H1 (cell line): ENCODE measurements at regions of chr17 and their contacts with region 1.

Region 1: GRCh38 chr17:30336369-30337171 is 2.7 kb upstream of the TMIGD1 start:
- DNase-seq: peak; percentile 9 to 63
- H3K4me3 ChIP-seq: no peak overlapping the region
- H3K27ac ChIP-seq: no peak overlapping the region
- H3K4me1 ChIP-seq: peaks cover 0 to 4% (median 1%) of the 10 kb centered on the region in 4 experiments; a peak in 3 of 7 replicates
- H3K27me3 ChIP-seq: no peaks in the 10 kb centered on the region
- CTCF ChIP-seq: peak in 2 of 3 experiments; percentile 70 to 71; a peak in 3 of 4 replicates
- EP300 ChIP-seq: no peak
- POLR2A ChIP-seq: no peak
- RAD21 ChIP-seq: peak; percentile 76

Region 2: DNA sequence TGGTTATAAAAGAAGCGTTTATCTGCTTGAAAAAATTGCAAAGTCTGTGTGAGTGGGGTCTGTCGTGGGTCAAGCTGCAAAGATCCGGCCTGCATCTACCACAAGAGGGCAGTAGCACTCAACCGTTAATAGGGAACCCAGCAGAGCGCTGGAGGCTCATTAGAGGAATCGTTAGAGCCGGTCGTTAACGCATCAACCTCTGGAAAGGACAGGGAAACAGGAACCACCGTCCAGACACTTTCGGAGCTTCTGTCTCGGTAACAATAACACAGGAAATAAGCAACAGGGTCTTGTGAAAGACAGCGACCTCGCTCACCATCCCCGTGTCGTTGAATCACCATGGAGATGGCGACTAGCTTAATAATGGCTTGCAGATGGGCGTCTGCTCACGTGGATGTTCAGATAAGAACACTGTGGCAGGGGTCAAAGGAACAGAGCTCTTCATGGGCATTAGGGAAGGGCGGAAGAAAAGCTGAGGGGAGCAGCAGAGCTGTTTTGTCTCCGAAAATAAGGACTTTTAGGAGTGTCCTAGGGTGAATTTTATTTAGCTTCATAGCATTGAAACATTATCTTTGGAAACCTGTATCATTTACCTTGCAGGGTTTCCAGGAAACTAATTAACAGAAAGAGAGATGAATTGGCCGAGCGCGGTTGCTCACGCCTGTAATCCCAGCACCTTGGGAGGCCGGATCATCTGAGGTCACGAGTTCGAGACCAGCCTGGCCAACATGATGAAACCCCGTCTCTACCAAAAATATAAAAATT is 231.8 kb before region 1 on chr17:
- CTCF ChIA-PET with region 1: interaction called, 10 read pairs
- POLR2A ChIA-PET with region 1: interaction called, 4 read pairs
- DNase-seq: peak; percentile 56 to 77
- H3K4me3 ChIP-seq: peak overlapping the region; percentile 28 to 61 (median 52); a peak in 7 of 8 replicates
- H3K27ac ChIP-seq: no peak overlapping the region
- H3K4me1 ChIP-seq: no peaks in the 10 kb centered on the region
- H3K27me3 ChIP-seq: no peaks in the 10 kb centered on the region
- CTCF ChIP-seq: peak; percentile 80 to 88 (median 81)
- EP300 ChIP-seq: no peak
- POLR2A ChIP-seq: peak; percentile 37 to 47; a peak in 2 of 3 replicates
- RAD21 ChIP-seq: peak; percentile 79 to 86

Region 3: GRCh38 chr17:30236766-30237165 is 99.8 kb before region 1 on chr17:
- CTCF ChIA-PET with region 1: interaction called, 19 read pairs
- POLR2A ChIA-PET with region 1: interaction called, 3 read pairs
- DNase-seq: peak; percentile 19 to 84
- H3K4me3 ChIP-seq: peak overlapping the region in 1 of 4 experiments; percentile 63; a peak in 3 of 8 replicates
- H3K27ac ChIP-seq: no peak overlapping the region
- H3K4me1 ChIP-seq: peaks cover 0 to 18% (median 15%) of the 10 kb centered on the region in 4 experiments; a peak in 5 of 7 replicates
- H3K27me3 ChIP-seq: peaks cover 32 to 63% (median 58%) of the 10 kb centered on the region in 4 experiments
- CTCF ChIP-seq: peak; percentile 43 to 62 (median 61)
- EP300 ChIP-seq: no peak
- POLR2A ChIP-seq: no peak
- RAD21 ChIP-seq: peak; percentile 57 to 76; a peak in 3 of 4 replicates

Region 4: DNA sequence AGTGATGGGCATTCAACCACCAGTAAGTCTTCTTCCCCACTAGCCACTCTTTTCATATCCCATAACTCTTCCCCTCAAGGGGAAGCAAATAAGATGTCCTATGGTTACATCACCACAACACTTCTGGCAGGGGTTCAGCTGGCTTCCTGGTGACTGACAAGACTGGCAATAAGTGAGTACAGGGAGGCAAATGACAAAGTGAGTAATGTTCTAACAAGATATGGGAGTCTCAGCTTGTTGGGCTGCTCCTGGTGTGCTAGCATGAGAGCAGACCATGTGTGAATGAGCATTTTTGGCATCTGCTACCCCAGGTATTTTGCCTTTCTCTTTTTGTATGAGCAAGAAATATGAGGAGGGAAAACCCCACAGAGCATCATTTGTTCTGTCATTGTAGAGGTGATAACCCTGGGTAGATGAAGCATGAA is 12.7 kb before region 1 on chr17:
- CTCF ChIA-PET with region 1: interaction called, 57 read pairs
- POLR2A ChIA-PET with region 1: no interaction called
- DNase-seq: no peak
- H3K4me3 ChIP-seq: no peak overlapping the region
- H3K27ac ChIP-seq: no peak overlapping the region
- H3K4me1 ChIP-seq: no peaks in the 10 kb centered on the region
- H3K27me3 ChIP-seq: no peaks in the 10 kb centered on the region
- CTCF ChIP-seq: no peak
- EP300 ChIP-seq: no peak
- POLR2A ChIP-seq: no peak
- RAD21 ChIP-seq: no peak